Calu3 (cell line): ENCODE measurements at regions of chr3 and their contacts with region 1.

Region 1: GRCh38 chr3:36373084-36373483 is 7.2 kb upstream of the STAC start:
- DNase-seq: no peak
- H3K4me3 Mint-ChIP-seq: no peak overlapping the region
- H3K27ac Mint-ChIP-seq: peak overlapping the region; percentile 26
- H3K4me1 Mint-ChIP-seq: peaks cover 17% of the 10 kb centered on the region
- H3K27me3 Mint-ChIP-seq: no peaks in the 10 kb centered on the region
- CTCF ChIP-seq: no peak

Region 2: DNA sequence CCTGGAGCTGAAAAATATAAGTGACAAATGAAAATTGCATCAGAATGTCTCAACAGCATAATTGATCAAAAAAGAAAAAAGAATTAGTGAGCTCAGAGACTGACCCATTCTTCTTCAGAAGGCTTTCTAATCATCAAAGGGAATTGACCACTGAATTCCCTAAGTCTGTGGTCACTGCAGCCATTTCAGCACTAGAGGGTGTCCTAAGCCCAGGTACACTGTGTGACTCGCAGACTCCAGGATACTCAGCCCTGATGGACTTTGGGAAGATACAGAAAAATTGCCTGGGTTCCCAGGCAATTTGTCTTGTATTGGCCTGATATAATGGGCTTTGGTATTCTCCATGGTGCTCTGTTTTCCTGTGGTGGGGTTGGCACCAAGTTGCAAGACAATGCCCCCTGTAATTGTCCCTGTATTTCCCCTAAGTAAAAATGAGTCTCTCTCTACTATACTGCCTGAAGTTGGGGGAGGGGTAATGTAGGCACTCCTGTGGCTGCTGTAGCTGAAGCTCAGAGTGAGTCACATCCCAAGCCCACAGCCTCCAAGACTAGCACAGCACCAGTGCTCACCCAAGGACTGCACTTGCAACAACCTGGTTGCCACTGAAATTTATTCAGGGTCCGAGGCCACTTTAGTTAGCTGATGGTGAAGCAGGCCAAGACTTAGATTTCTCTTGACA is 248.8 kb before region 1 on chr3:
- CTCF ChIA-PET with region 1: no interaction called
- intact Hi-C with region 1: loop called (anchors 10 kb)
- DNase-seq: peak; percentile 64
- H3K4me3 Mint-ChIP-seq: no peak overlapping the region
- H3K27ac Mint-ChIP-seq: no peak overlapping the region
- H3K4me1 Mint-ChIP-seq: peaks cover 6% of the 10 kb centered on the region
- H3K27me3 Mint-ChIP-seq: no peaks in the 10 kb centered on the region
- CTCF ChIP-seq: peak; percentile 53

Region 3: DNA sequence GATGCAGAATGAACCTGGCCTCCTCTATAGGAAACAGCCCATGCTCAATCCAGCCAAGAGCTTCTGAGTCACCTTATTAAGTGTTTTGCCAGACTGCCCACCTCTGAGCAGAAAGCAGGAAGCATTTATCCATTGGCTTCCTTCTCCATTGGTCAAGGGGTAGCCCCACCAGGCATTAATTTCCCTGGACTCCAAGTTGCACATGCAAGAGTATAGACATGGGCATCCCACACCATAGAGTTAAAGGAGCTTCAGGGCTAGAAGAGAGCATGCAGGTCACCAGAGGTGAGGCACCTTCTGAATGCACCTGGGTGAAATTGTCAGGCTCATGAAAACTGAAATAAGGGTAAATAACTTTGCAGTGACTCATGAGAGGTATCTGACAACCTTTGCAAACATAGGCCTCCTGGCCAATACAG is 223.6 kb before region 1 on chr3:
- CTCF ChIA-PET with region 1: no interaction called
- intact Hi-C with region 1: loop called (anchors 5 kb)
- DNase-seq: peak; percentile 43
- H3K4me3 Mint-ChIP-seq: no peak overlapping the region
- H3K27ac Mint-ChIP-seq: no peak overlapping the region
- H3K4me1 Mint-ChIP-seq: peaks cover 28% of the 10 kb centered on the region
- H3K27me3 Mint-ChIP-seq: no peaks in the 10 kb centered on the region
- CTCF ChIP-seq: no peak

Region 4: GRCh38 chr3:36408146-36408545 is 35.1 kb after region 1 on chr3:
- CTCF ChIA-PET with region 1: no interaction called
- intact Hi-C with region 1: no loop called
- DNase-seq: no peak
- H3K4me3 Mint-ChIP-seq: no peak overlapping the region
- H3K27ac Mint-ChIP-seq: no peak overlapping the region
- H3K4me1 Mint-ChIP-seq: peaks cover 9% of the 10 kb centered on the region
- H3K27me3 Mint-ChIP-seq: no peaks in the 10 kb centered on the region
- CTCF ChIP-seq: no peak